ENCODE measurements at regions of chr2 and their contacts with region 1.

Region 1: DNA sequence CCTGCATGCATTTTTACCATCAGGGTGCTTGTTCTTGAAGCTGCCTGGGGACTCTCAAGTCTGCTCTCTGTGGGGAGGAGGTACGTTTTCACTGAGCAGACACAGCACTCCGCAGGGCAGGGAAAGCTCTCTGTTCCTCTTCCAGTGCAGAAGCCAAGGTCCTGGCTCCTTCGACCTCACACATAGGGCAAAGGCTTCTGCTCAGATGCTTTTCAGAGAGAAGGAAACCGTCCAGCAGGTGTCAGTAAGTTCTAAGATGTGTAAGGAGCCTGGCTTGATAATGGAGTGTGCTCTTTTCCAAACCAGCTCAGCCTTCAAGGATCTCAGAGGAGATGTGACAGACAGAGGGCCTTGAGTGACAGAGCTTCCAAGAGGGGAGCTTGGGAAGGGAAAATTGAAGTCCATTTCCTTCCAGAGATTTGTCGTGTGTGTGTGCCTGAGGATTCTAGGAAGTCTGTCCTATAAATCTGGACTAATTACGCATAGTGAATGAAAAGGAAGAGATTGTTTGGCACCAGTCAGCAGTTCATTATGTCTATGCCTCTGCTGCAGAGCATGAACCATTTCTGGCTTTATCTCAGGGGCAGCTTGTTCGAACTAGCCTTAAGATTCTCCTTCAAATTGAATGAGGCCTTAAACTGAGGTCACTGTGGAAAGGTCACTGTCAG is 67.3 kb upstream of the UPP2 start:
- DNase-seq: peak; percentile 61
- H3K4me3 Mint-ChIP-seq: no peak overlapping the region
- H3K27ac Mint-ChIP-seq: no peak overlapping the region
- H3K4me1 Mint-ChIP-seq: peaks cover 11% of the 10 kb centered on the region
- H3K27me3 Mint-ChIP-seq: no peaks in the 10 kb centered on the region
- CTCF ChIP-seq: peak; percentile 50

Region 2: DNA sequence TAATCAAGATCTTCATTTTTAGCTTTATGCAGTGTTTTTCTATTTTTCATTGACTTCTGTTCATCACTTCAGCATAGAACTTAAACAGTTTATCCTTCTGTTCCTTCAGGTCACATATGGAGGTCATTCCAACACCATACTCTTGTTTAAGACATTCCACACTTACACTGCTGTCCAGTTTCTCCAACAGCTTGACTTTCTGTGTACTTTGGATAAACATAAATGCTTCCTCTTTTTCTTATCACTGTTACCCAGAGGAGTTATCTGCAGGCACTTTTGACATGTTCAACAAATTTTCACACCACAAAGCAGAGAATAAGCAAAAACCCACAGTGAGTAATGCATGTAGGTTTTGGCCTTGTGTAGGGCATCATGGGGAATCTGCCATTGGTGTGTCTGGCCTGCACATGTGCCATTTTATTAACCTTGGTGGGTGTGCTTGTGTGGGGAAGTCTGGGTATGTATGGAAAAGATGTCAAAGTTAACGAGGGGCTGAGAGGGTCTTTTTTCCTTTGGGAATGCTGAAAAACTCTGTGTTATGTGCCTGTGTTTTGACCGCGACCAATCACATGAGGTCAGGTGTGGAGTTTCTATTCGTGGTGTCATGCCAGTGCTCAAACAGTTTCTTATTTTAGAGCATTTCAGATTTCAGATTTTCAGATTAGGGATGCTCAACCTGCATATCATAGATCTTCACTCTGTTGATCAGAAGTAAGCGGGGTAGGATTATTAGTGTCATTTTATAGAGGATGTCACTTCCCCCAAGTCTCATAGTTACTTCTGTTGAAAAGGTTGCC is 104.3 kb before region 1 on chr2:
- CTCF ChIA-PET with region 1: no interaction called
- intact Hi-C with region 1: no loop called
- DNase-seq: no peak
- H3K4me3 Mint-ChIP-seq: no peak overlapping the region
- H3K27ac Mint-ChIP-seq: no peak overlapping the region
- H3K4me1 Mint-ChIP-seq: no peaks in the 10 kb centered on the region
- H3K27me3 Mint-ChIP-seq: no peaks in the 10 kb centered on the region
- CTCF ChIP-seq: no peak

Region 3: GRCh38 chr2:158049129-158049855 is 15.0 kb after region 1 on chr2:
- CTCF ChIA-PET with region 1: interaction called, 14 read pairs
- intact Hi-C with region 1: no loop called
- DNase-seq: no peak
- H3K4me3 Mint-ChIP-seq: no peak overlapping the region
- H3K27ac Mint-ChIP-seq: no peak overlapping the region
- H3K4me1 Mint-ChIP-seq: no peaks in the 10 kb centered on the region
- H3K27me3 Mint-ChIP-seq: no peaks in the 10 kb centered on the region
- CTCF ChIP-seq: no peak

Region 4: DNA sequence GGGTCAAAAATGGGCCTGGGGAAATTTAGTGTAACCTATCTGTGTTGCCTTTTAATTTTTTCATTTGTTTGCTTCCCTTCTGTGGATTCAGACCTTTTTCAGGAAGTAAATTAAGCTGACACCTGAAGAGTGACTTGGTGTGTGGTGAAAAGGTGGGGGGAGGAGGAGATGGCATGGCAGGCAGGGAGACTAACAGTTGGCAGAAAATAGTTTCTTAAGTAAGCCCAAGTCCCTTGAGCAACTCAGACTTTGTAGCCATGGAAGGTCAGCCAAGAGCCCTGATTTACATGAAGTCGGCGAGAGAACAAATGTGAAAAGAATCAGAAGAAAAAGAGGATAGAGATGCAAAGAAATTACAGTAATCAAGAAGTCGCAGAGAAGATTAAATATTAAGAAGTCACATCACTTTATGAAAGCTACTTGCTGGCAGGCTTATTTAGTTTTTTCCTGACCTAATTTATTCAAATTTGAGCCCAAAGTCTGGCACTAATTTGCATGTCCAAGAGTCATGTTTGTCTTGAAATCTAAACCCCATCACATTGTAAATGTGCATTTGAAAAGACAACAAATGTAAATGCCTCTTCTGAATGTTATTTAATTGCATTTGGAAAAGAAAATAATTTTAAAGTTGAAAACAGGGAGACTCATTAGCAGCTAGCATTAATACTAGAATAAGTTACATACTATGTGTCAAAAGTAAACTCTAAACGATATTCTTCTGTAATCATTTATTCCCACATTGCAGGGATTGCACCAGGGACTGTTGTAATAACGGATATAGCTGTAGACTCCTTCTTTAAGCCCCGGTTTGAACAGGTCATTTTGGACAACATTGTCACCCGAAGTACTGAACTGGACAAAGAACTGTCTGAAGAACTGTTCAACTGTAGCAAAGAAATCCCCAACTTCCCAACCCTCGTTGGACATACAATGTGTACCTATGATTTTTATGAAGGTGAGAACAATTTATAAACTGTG is 86.6 kb after region 1 on chr2:
- CTCF ChIA-PET with region 1: interaction called, 3 read pairs
- intact Hi-C with region 1: loop called (anchors 2 kb)
- DNase-seq: peak; percentile 33
- H3K4me3 Mint-ChIP-seq: no peak overlapping the region
- H3K27ac Mint-ChIP-seq: no peak overlapping the region
- H3K4me1 Mint-ChIP-seq: peaks cover 36% of the 10 kb centered on the region
- H3K27me3 Mint-ChIP-seq: no peaks in the 10 kb centered on the region
- CTCF ChIP-seq: no peak

Region 5: DNA sequence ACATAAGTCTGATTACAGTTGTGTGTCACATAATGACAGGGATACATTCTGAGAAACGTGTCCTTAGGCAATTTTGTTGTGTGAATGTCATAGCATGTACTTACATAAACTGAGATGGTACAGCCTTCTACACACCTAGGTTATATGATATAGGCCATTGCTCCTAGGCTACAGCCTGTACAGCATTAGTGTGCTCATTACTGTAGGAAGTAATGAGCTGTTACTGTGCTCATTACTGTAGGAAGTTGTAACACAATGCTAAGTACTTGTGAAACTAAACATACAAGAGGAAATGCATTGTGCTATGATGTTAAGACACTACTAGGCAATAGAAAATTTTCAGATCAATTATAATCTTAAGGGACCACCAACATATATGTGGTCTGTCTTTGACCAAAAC is 140.2 kb after region 1 on chr2:
- CTCF ChIA-PET with region 1: interaction called, 3 read pairs
- intact Hi-C with region 1: loop called (anchors 5 kb)
- DNase-seq: no peak
- H3K4me3 Mint-ChIP-seq: no peak overlapping the region
- H3K27ac Mint-ChIP-seq: no peak overlapping the region
- H3K4me1 Mint-ChIP-seq: peaks cover 7% of the 10 kb centered on the region
- H3K27me3 Mint-ChIP-seq: no peaks in the 10 kb centered on the region
- CTCF ChIP-seq: no peak

Region 6: DNA sequence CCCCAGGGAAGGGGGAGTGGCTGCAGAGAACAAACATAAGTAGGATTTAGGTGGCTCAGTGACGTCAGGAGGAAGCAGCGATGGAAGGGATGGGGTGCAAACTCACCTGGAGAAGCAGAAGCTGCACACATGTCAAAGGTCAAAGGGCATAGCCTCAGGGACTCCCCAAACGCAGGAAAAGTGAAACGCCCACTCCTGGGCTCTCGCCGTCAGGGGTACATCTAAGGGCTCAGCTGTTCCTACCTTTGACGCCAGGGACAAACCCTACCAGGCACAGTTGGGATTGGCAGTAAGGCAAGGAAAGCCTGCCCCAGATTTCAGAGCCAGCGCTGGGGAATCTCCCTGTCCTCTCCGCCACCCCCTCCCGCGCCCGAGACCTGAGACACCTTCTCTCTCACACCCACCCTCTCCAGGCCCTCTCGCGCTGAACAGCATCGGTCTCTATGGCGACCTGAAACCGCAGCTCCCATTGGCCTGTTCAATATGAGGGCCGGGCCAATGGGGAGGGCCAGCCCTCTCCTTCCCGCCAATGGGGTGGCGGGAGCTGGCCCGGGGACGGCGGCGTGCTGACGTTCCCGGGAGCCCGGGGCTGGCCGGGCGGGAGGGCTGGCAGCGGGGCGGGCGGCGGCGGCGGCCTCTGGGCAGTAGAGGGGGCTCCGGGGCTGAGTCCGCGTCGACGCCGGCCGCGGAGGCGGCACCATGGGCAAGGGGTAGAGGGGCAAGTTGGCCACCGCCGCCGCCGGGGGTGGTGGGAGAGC is 422.2 kb after region 1 on chr2 and contains the starts of genes CCDC148 and PKP4:
- CTCF ChIA-PET with region 1: interaction called, 8 read pairs
- intact Hi-C with region 1: loop called (anchors 5 kb)
- DNase-seq: peak; percentile 93
- H3K4me3 Mint-ChIP-seq: peak within 1 kb of the TSS; percentile 91
- H3K27ac Mint-ChIP-seq: peak within 1 kb of the TSS; percentile 81
- H3K4me1 Mint-ChIP-seq: peaks cover 21% of the 10 kb centered on the region
- H3K27me3 Mint-ChIP-seq: no peaks in the 10 kb centered on the region
- CTCF ChIP-seq: no peak
- total RNA-seq, gene CCDC148: 4.3 and 5.1 TPM in 2 replicates
- total RNA-seq, gene PKP4: 119 and 137 TPM in 2 replicates

Region 7: DNA sequence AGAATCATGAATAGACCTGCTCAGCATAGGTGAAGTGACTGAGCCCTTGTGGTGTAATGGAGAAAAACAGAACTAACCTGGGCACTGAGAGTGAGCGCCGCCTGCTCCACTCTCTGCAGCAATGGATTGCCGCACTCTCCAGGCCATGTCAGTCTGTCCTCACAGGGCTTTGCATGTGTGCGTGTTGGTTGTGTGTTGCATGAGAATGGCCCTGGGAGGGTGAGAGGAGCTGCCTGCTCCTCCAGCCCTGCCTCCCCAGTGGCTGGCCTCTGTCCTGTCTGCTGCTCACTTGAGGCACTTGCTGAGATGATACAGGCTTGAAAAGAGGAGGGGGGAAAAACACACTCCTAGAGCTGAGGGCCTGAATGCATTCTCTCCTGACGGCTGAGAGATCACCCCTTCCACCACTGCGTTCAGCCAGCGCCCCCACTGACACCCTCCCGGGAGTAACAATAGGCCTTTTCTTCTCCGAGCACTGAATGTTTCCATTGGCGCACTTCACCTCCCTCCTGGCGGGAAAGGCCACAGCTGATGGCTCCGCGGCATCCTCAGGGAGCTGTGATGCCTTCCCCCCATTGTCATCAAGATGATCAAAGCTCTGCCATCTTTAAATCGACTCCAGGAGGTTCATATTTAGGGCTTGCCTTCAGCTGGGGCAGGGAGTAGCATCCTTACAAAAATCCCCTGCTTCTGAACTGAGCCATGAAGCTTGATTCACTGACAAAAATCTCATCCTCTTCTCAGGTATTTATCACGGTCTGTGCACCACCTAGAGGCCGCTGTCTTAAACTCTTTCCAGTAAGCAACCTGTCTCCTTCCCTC is 710.9 kb after region 1 on chr2:
- CTCF ChIA-PET with region 1: interaction called, 11 read pairs
- intact Hi-C with region 1: no loop called
- DNase-seq: peak; percentile 51
- H3K4me3 Mint-ChIP-seq: no peak overlapping the region
- H3K27ac Mint-ChIP-seq: no peak overlapping the region
- H3K4me1 Mint-ChIP-seq: peaks cover 15% of the 10 kb centered on the region
- H3K27me3 Mint-ChIP-seq: peaks cover 59% of the 10 kb centered on the region
- CTCF ChIP-seq: peak; percentile 53

Region 8: GRCh38 chr2:158753641-158754611 is 719.6 kb after region 1 on chr2:
- CTCF ChIA-PET with region 1: interaction called, 6 read pairs
- intact Hi-C with region 1: loop called (anchors 2 kb)
- DNase-seq: peak; percentile 43
- H3K4me3 Mint-ChIP-seq: no peak overlapping the region
- H3K27ac Mint-ChIP-seq: no peak overlapping the region
- H3K4me1 Mint-ChIP-seq: no peaks in the 10 kb centered on the region
- H3K27me3 Mint-ChIP-seq: peaks cover 38% of the 10 kb centered on the region
- CTCF ChIP-seq: peak; percentile 78

Measured in Calu3 (cell line).